ENCODE measurements at regions of chr6 and their contacts with region 1.

Region 1: GRCh38 chr6:130132286-130132701 is 90.5 kb downstream of the SAMD3 start:
- DNase-seq: peak in 8 of 9 donors; percentile 32 to 92 (median 84)
- ATAC-seq: peak; percentile 92
- H3K4me3 ChIP-seq: peak overlapping the region; percentile 21
- H3K4me3 Mint-ChIP-seq: peak overlapping the region; percentile 51 to 81 (median 70)
- H3K27ac ChIP-seq: peak overlapping the region; percentile 71
- H3K27ac Mint-ChIP-seq: peak overlapping the region; percentile 85 to 98 (median 93)
- H3K4me1 ChIP-seq: peaks cover 43 to 61% of the 10 kb centered on the region in 2 donors
- H3K4me1 Mint-ChIP-seq: peaks cover 59 to 100% (median 93%) of the 10 kb centered on the region in 7 donors
- H3K27me3 ChIP-seq: no peaks in the 10 kb centered on the region
- H3K27me3 Mint-ChIP-seq: no peaks in the 10 kb centered on the region

Region 2: DNA sequence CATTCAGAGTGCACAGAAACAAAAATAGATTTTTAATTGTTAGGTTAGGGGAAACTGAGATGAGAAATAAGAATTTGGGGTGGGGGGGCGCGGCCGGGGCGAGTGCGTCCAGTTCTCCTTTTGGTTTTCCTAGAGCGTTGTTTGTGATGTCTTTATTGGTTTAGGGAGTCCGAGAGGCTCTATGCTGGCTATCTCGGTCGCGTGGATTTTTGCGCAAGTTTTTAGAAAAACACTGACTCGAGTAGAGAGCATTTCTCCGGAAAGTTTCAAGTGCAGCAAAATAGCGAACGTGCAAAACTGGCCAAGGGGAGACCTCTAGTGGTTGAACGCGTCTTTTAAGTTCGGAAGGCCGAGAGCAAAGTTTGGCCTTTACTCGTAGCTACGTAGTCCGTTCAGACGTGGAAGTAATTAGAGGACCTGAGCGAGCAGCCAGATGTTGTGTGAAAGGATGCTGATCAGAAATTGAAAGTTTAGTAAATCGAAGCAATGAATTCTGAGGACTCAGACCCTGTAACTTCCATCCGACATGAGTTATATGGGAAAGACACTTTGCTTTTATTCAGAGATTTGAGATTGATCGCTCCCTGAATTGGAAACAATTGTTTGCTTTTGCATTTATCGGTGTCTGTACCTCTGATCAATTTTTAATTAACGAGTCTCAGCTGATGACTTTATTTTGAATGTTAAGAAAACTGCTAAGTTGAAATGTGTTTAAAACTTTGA is 111.2 kb before region 1 on chr6:
- CTCF ChIA-PET with region 1: interaction called, 3 read pairs
- POLR2A ChIA-PET with region 1: interaction called, 3 read pairs
- intact Hi-C with region 1: loop called (anchors 1 to 2 kb)
- DNase-seq: peak; percentile 43 to 83 (median 78)
- ATAC-seq: peak; percentile 81
- H3K4me3 ChIP-seq: peak overlapping the region; percentile 62
- H3K4me3 Mint-ChIP-seq: peak overlapping the region; percentile 78 to 100 (median 98)
- H3K27ac ChIP-seq: peak overlapping the region; percentile 71
- H3K27ac Mint-ChIP-seq: peak overlapping the region; percentile 91 to 98 (median 96)
- H3K4me1 ChIP-seq: peaks cover 5 to 14% of the 10 kb centered on the region in 2 donors
- H3K4me1 Mint-ChIP-seq: peaks cover 21 to 56% (median 48%) of the 10 kb centered on the region in 7 donors
- H3K27me3 ChIP-seq: no peaks in the 10 kb centered on the region
- H3K27me3 Mint-ChIP-seq: peaks cover 0 to 19% (median 0%) of the 10 kb centered on the region in 5 donors

Region 3: DNA sequence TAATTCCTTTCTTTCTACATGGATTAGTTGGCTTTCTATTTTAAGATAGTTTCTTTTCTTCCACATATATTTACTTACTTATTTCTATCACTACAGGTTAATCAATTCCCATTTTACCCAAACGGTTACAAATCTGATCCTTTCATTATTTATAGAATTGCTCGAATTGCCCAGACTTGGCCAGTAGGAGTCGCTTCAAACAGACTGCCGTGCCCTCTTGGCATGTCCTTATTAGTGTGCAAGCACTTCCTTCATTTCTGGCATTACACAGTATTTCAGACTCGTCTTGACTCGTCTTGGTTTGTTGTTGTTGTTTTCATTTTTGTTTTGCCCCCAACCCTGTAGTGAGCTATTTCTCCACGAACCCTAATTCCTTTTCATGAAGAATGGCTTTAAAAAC is 15.9 kb after region 1 on chr6:
- CTCF ChIA-PET with region 1: interaction called, 5 read pairs
- POLR2A ChIA-PET with region 1: interaction called, 8 read pairs
- intact Hi-C with region 1: loop called in 1 of 2 experiments (anchors 1 kb)
- DNase-seq: peak in 1 of 9 donors; percentile 20
- ATAC-seq: peak; percentile 55
- H3K4me3 ChIP-seq: no peak overlapping the region
- H3K4me3 Mint-ChIP-seq: peak overlapping the region in 1 of 10 donors; percentile 26
- H3K27ac ChIP-seq: no peak overlapping the region
- H3K27ac Mint-ChIP-seq: peak overlapping the region in 6 of 9 donors; percentile 8 to 78 (median 43)
- H3K4me1 ChIP-seq: no peaks in the 10 kb centered on the region
- H3K4me1 Mint-ChIP-seq: peaks cover 2 to 25% (median 8%) of the 10 kb centered on the region in 7 donors
- H3K27me3 ChIP-seq: no peaks in the 10 kb centered on the region
- H3K27me3 Mint-ChIP-seq: no peaks in the 10 kb centered on the region

Region 4: DNA sequence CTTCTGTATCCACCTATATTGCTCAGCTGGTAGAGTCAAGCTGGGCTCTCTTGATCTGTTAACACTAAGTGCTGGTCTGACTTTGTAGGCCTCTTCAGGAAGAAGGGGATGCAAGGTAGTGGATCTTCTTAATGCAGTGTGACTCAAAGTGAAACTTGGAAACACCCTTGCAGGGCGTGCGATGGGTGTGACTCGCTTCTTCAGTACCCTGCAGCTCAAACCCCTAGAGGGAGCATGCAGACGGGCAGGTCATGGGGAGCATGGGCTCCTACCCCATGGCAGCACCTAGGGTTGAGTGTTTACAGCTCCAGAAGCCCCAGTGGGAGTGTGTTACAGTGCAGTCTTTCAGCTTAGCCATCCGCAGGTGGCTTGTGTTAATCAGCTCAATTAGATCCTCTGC is 91.2 kb after region 1 on chr6:
- CTCF ChIA-PET with region 1: interaction called, 3 read pairs
- POLR2A ChIA-PET with region 1: interaction called, 7 read pairs
- intact Hi-C with region 1: loop called (anchors 1 kb)
- DNase-seq: peak in 8 of 9 donors; percentile 38 to 65 (median 52)
- ATAC-seq: peak; percentile 89
- H3K4me3 ChIP-seq: peak overlapping the region; percentile 19
- H3K4me3 Mint-ChIP-seq: peak overlapping the region; percentile 4 to 93 (median 80)
- H3K27ac ChIP-seq: peak overlapping the region; percentile 57
- H3K27ac Mint-ChIP-seq: peak overlapping the region; percentile 89 to 97 (median 94)
- H3K4me1 ChIP-seq: peaks cover 16 to 20% of the 10 kb centered on the region in 2 donors
- H3K4me1 Mint-ChIP-seq: peaks cover 10 to 47% (median 39%) of the 10 kb centered on the region in 7 donors
- H3K27me3 ChIP-seq: no peaks in the 10 kb centered on the region
- H3K27me3 Mint-ChIP-seq: no peaks in the 10 kb centered on the region

Region 5: DNA sequence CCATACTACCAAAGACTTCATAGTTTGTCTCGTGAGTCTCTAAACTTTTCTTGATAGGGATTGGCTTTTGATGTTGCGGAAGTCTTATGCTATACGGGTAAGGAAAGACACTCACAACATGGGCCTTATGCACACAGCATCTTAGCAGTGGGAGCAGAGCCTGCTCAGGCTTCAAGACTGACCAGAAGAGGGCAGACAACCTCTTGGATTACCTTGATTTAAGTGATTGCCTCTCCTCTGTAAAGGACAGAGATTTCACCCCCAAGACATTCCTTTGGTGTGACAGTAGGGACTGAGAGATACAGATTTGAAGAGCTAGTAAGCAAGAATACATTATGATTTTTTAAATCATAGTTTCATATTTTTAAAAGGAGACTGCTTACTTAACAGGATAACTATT is 161.5 kb after region 1 on chr6:
- CTCF ChIA-PET with region 1: no interaction called
- POLR2A ChIA-PET with region 1: no interaction called
- intact Hi-C with region 1: no loop called
- DNase-seq: peak in 5 of 9 donors; percentile 24 to 53 (median 46)
- ATAC-seq: peak; percentile 73
- H3K4me3 ChIP-seq: no peak overlapping the region
- H3K4me3 Mint-ChIP-seq: no peak overlapping the region
- H3K27ac ChIP-seq: no peak overlapping the region
- H3K27ac Mint-ChIP-seq: peak overlapping the region in 1 of 9 donors; percentile 53
- H3K4me1 ChIP-seq: no peaks in the 10 kb centered on the region
- H3K4me1 Mint-ChIP-seq: peaks cover 0 to 3% (median 0%) of the 10 kb centered on the region in 7 donors
- H3K27me3 ChIP-seq: no peaks in the 10 kb centered on the region
- H3K27me3 Mint-ChIP-seq: peaks cover 0 to 27% (median 3%) of the 10 kb centered on the region in 5 donors

Region 6: DNA sequence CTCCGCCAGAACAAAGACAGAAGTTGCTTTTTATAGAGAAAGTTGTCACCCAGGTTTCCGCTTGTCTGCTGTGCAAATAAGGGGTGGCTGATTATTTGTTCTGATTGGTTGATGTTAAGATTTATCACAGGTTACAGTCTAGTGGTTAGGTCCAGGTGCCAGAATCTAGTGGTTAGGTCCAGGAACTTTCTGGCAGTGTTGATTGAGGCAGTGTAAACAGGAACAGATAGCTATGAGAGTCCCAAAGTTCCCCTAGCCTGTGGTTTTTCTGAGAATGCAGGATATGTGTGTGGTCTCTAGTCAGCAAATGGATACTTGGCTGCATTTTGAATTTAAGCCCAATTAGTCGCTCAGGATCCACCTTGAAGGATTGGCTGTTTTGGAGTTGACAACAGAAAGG is 381.5 kb after region 1 on chr6:
- CTCF ChIA-PET with region 1: no interaction called
- POLR2A ChIA-PET with region 1: no interaction called
- intact Hi-C with region 1: loop called (anchors 1 to 10 kb)
- DNase-seq: peak in 8 of 9 donors; percentile 50 to 87 (median 74)
- ATAC-seq: peak; percentile 94
- H3K4me3 ChIP-seq: no peak overlapping the region
- H3K4me3 Mint-ChIP-seq: peak overlapping the region in 9 of 10 donors; percentile 40 to 75 (median 64)
- H3K27ac ChIP-seq: peak overlapping the region; percentile 62
- H3K27ac Mint-ChIP-seq: peak overlapping the region; percentile 77 to 97 (median 87)
- H3K4me1 ChIP-seq: peaks cover 35 to 42% of the 10 kb centered on the region in 2 donors
- H3K4me1 Mint-ChIP-seq: peaks cover 17 to 80% (median 73%) of the 10 kb centered on the region in 7 donors
- H3K27me3 ChIP-seq: no peaks in the 10 kb centered on the region
- H3K27me3 Mint-ChIP-seq: peaks cover 0 to 4% (median 0%) of the 10 kb centered on the region in 5 donors

Region 7: GRCh38 chr6:130742131-130742681 is 609.9 kb after region 1 on chr6:
- CTCF ChIA-PET with region 1: no interaction called
- POLR2A ChIA-PET with region 1: no interaction called
- intact Hi-C with region 1: no loop called
- DNase-seq: no peak
- ATAC-seq: no peak
- H3K4me3 ChIP-seq: no peak overlapping the region
- H3K4me3 Mint-ChIP-seq: no peak overlapping the region
- H3K27ac ChIP-seq: no peak overlapping the region
- H3K27ac Mint-ChIP-seq: no peak overlapping the region
- H3K4me1 ChIP-seq: no peaks in the 10 kb centered on the region
- H3K4me1 Mint-ChIP-seq: peaks cover 0 to 3% (median 0%) of the 10 kb centered on the region in 7 donors
- H3K27me3 ChIP-seq: no peaks in the 10 kb centered on the region
- H3K27me3 Mint-ChIP-seq: peaks cover 0 to 32% (median 5%) of the 10 kb centered on the region in 5 donors

Region 8: DNA sequence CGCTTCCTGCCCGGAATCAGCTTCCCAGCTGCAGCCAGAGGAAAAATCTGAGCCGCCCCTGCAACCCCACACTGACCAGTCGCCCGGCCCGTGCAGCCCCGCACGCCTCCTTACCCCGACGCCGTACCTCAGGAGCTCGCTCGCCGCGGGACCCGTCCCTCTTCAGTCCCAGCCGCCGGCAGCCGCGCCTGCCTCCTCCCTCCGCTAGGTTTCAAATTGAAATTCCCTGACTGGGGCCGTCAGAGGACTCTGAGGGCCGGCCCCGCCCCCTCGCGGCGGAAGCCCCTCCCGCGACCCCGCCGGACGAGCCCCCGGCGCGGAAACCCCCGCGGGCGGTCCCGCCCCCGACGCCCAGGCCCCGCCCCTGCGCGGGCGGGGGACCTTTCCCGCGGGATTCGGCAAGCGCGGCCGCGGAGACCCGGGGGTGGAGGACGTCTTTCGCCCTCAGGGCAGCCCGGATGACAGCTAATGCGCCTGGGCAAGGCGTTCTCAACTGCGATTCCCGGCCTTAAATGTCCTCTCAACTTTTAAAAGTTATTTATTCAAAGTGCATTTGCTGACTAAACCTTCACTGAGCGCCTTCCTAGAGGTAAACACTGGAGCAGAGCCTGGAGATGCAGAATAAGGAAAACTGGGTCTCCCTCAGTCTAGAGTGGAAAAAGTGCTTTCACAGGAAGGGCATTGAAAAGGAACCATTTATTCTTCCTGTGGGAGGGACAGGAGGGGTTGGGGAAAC is 930.9 kb after region 1 on chr6 and contains the start of gene EPB41L2:
- CTCF ChIA-PET with region 1: no interaction called
- POLR2A ChIA-PET with region 1: no interaction called
- intact Hi-C with region 1: loop called in 1 of 2 experiments (anchors 10 kb)
- DNase-seq: peak; percentile 63 to 87 (median 73)
- ATAC-seq: peak; percentile 94
- H3K4me3 ChIP-seq: peak within 1 kb of the TSS; percentile 63
- H3K4me3 Mint-ChIP-seq: peak within 1 kb of the TSS; percentile 83 to 93 (median 90)
- H3K27ac ChIP-seq: peak within 1 kb of the TSS; percentile 67
- H3K27ac Mint-ChIP-seq: peak within 1 kb of the TSS; percentile 20 to 92 (median 77)
- H3K4me1 ChIP-seq: peaks cover 0 to 6% of the 10 kb centered on the region in 2 donors
- H3K4me1 Mint-ChIP-seq: peaks cover 8 to 27% (median 25%) of the 10 kb centered on the region in 7 donors
- H3K27me3 ChIP-seq: no peaks in the 10 kb centered on the region
- H3K27me3 Mint-ChIP-seq: peaks cover 0 to 35% (median 0%) of the 10 kb centered on the region in 5 donors
- total RNA-seq, gene EPB41L2: 10.3 to 26.9 (median 20.9) TPM

Measured in naive thymus-derived CD4-positive, alpha-beta T cell (primary cell).